ENCODE measurements at regions of chrX and their contacts with region 1.

Region 1: DNA sequence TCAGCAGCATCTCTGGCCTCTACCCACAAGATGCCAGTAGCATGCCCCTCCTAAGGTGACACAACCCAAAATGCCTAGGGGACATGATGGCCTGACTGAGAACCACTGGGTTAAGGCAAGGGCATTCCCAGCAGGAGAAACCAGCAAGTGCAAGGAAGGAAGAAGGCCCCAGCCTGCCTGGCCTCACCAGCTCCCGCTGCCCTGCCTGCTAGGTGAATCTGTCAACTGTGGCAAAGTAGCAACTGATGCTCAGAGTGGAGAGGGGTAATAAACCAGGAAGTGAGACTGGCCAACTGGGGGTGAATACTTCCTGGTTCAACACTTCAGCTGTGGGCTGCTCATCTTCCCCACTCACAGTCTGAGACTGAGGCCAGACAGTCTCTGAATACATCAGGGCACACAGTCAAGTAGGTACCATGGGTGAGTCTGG is 34.2 kb downstream of the SAT1 start:
- DNase-seq: no peak
- ATAC-seq: peak in 1 of 8 donors; percentile 45
- H3K4me3 ChIP-seq: no peak overlapping the region
- H3K27ac ChIP-seq: no peak overlapping the region
- H3K4me1 ChIP-seq: no peaks in the 10 kb centered on the region
- H3K27me3 ChIP-seq: peaks cover 0 to 5% (median 0%) of the 10 kb centered on the region in 7 donors
- CTCF ChIP-seq: no peak

Region 2: GRCh38 chrX:23871905-23872546 is 54.8 kb after region 1 on chrX:
- intact Hi-C with region 1: loop called in 1 of 10 experiments (anchors 10 kb)
- DNase-seq: no peak
- ATAC-seq: peak in 2 of 8 donors; percentile 46 to 50
- H3K4me3 ChIP-seq: no peak overlapping the region
- H3K27ac ChIP-seq: peak overlapping the region in 1 of 10 donors; percentile 69
- H3K4me1 ChIP-seq: peaks cover 0 to 6% (median 0%) of the 10 kb centered on the region in 9 donors
- H3K27me3 ChIP-seq: no peaks in the 10 kb centered on the region
- CTCF ChIP-seq: no peak

Region 3: GRCh38 chrX:23907498-23908218 is 90.5 kb after region 1 on chrX and contains the starts of genes APOO and CXorf58:
- intact Hi-C with region 1: no loop called
- DNase-seq: peak; percentile 89 to 91
- ATAC-seq: peak; percentile 96 to 99 (median 98)
- H3K4me3 ChIP-seq: peak within 1 kb of the TSS; percentile 50 to 75 (median 65)
- H3K27ac ChIP-seq: peak within 1 kb of the TSS; percentile 78 to 95 (median 88)
- H3K4me1 ChIP-seq: peaks cover 0 to 16% (median 2%) of the 10 kb centered on the region in 9 donors
- H3K27me3 ChIP-seq: peaks cover 0 to 26% (median 0%) of the 10 kb centered on the region in 7 donors
- CTCF ChIP-seq: peak; percentile 49 to 89 (median 74)
- total RNA-seq, gene APOO: 73.5 to 132 (median 103) TPM
- total RNA-seq, gene CXorf58: 0.13 to 1.1 (median 0.33) TPM in 8 of 10 donors, not detected in the others

Measured in heart right ventricle (tissue), 16 donors.